Activated CD8-positive, alpha-beta memory T cell treated with anti-CD3 and anti-CD28 coated beads, Interleukin-2, amount 10 ng/mL, durations not matched to agents 7 days and 5 days (primary cell): ENCODE measurements at regions of chr17 and their contacts with region 1.

Region 1: GRCh38 chr17:68172461-68172954 is 75.3 kb upstream of the AMZ2 start:
- DNase-seq: peak; percentile 84
- ATAC-seq: peak; percentile 84
- H3K4me3 Mint-ChIP-seq: no peak overlapping the region
- H3K27ac Mint-ChIP-seq: no peak overlapping the region
- H3K4me1 Mint-ChIP-seq: peaks cover 25% of the 10 kb centered on the region
- H3K27me3 Mint-ChIP-seq: no peaks in the 10 kb centered on the region

Region 2: GRCh38 chr17:68057531-68057952 is 115.0 kb before region 1 on chr17:
- CTCF ChIA-PET with region 1: interaction called, 12 read pairs
- DNase-seq: peak; percentile 75
- ATAC-seq: peak; percentile 79
- H3K4me3 Mint-ChIP-seq: no peak overlapping the region
- H3K27ac Mint-ChIP-seq: no peak overlapping the region
- H3K4me1 Mint-ChIP-seq: peaks cover 7% of the 10 kb centered on the region
- H3K27me3 Mint-ChIP-seq: peaks cover 6% of the 10 kb centered on the region

Region 3: GRCh38 chr17:68184816-68185436 is 12.4 kb after region 1 on chr17:
- CTCF ChIA-PET with region 1: interaction called, 18 read pairs
- DNase-seq: peak; percentile 80
- ATAC-seq: peak; percentile 69
- H3K4me3 Mint-ChIP-seq: peak overlapping the region; percentile 85
- H3K27ac Mint-ChIP-seq: peak overlapping the region; percentile 92
- H3K4me1 Mint-ChIP-seq: peaks cover 63% of the 10 kb centered on the region
- H3K27me3 Mint-ChIP-seq: no peaks in the 10 kb centered on the region

Region 4: DNA sequence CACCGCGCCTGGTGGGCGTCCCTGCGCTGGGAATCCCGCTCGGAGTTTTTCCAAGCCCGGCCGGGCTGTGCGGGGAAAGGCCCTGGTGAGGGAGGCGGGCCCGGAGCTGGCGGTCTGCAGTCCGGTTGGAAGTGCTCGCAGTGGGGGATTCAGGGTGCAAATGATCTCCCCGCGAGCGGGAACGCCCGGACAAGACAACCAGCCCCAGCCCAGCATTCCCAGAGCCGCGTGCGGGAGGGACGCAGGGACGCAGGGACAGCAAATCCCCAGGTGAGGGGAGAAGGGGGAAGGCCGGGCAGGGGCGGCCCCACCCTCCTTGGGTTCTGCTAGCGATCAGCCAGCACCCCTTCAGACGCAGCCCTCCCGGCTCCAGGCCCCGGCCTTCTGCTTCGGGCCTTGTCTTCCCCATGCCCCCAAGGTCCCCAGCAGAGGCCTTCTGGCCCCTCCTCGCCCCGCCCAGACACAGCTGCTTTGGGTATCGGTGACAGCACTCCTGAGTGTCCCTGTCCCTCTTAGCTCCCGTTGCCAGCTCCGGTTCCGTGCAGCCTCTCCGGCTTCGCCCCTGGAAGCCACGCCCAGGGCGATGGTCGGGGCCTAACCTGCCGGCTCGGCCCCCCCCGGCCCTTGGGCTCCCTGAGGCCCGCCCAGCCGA is 24.6 kb after region 1 on chr17:
- CTCF ChIA-PET with region 1: interaction called, 70 read pairs
- DNase-seq: peak; percentile 57
- ATAC-seq: peak; percentile 12
- H3K4me3 Mint-ChIP-seq: peak overlapping the region; percentile 42
- H3K27ac Mint-ChIP-seq: no peak overlapping the region
- H3K4me1 Mint-ChIP-seq: peaks cover 29% of the 10 kb centered on the region
- H3K27me3 Mint-ChIP-seq: peaks cover 43% of the 10 kb centered on the region

Region 5: GRCh38 chr17:68457539-68458259 is 285.2 kb after region 1 on chr17:
- CTCF ChIA-PET with region 1: interaction called, 17 read pairs
- DNase-seq: peak; percentile 99
- ATAC-seq: peak; percentile 94
- H3K4me3 Mint-ChIP-seq: peak overlapping the region; percentile 75
- H3K27ac Mint-ChIP-seq: peak overlapping the region; percentile 94
- H3K4me1 Mint-ChIP-seq: peaks cover 81% of the 10 kb centered on the region
- H3K27me3 Mint-ChIP-seq: no peaks in the 10 kb centered on the region